Pancreas (tissue), 10 donors: ENCODE measurements at regions of chr13 and their contacts with region 1.

Region 1: GRCh38 chr13:41075034-41075433 is 13.7 kb downstream of the WBP4 start:
- DNase-seq: no peak
- ATAC-seq: peak in 3 of 4 donors; percentile 60 to 79 (median 75)
- H3K4me3 ChIP-seq: no peak overlapping the region
- H3K27ac ChIP-seq: no peak overlapping the region
- H3K4me1 ChIP-seq: no peaks in the 10 kb centered on the region
- H3K27me3 ChIP-seq: no peaks in the 10 kb centered on the region
- CTCF ChIP-seq: peak in 2 of 4 donors; percentile 24 to 26

Region 2: DNA sequence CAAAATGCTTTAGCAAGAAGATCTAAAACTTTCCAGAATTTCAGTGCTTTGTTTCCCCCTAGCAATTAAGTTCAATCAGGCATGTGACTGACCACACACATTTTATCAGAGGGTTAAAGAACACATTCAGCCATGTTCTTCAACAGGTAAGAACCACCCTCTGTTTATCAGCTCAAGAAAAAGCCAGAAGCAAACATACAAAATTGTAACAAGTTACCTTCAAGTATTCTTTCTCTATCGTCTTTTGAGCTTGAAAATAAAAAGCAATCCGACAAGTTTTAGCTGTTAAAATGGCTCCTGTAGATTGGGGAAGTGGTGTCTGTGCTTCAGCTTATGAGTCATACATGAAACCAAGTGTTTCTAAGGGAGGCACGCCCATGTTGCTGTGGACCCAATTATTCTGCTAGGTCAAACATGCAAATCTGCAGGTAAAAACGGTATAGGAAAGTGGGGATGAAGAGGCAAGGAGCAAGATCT is 56.0 kb before region 1 on chr13 and contains the start of gene ELF1:
- intact Hi-C with region 1: no loop called
- DNase-seq: peak in 4 of 6 donors; percentile 31 to 67 (median 52)
- ATAC-seq: peak; percentile 83 to 95 (median 92)
- H3K4me3 ChIP-seq: peak within 1 kb of the TSS; percentile 9 to 41 (median 12)
- H3K27ac ChIP-seq: peak within 1 kb of the TSS; percentile 22 to 96 (median 82)
- H3K4me1 ChIP-seq: peaks cover 6 to 43% (median 41%) of the 10 kb centered on the region in 3 donors
- H3K27me3 ChIP-seq: no peaks in the 10 kb centered on the region
- CTCF ChIP-seq: no peak
- total RNA-seq, gene ELF1: 31.6 to 61.6 (median 40.6) TPM

Region 3: GRCh38 chr13:41216160-41216559 is 141.1 kb after region 1 on chr13:
- intact Hi-C with region 1: loop called in 2 of 3 experiments (anchors 5 to 10 kb)
- DNase-seq: no peak
- ATAC-seq: no peak
- H3K4me3 ChIP-seq: no peak overlapping the region
- H3K27ac ChIP-seq: no peak overlapping the region
- H3K4me1 ChIP-seq: no peaks in the 10 kb centered on the region
- H3K27me3 ChIP-seq: no peaks in the 10 kb centered on the region
- CTCF ChIP-seq: no peak

Region 4: DNA sequence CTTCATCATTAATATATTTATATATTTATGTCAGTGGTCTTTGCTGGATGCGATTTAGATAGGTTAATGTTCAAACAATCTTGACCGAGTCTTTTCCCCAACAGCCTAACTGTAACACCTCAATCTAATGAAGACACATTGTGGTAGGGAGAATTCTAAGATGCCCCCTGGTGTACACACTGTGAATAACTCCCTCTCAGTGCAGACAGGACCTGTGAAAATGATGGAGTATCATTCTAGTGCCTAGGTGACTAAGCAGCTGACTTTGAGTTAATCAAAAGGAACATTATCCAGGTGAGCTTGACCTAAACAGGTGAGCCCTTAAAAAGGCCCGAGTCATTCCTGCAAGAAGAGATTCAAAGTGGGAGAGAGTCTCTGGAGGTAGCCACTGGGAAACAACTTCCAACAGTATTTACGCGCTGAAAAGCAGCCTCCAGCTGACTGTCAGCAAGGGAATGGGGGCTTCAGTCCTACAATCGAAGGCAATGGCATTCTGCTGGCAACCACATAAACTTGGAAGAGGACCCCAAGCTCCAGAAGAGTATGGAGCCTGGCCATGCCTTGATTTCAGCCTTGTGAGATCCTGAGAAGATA is 147.3 kb after region 1 on chr13:
- intact Hi-C with region 1: loop called in 2 of 3 experiments (anchors 5 to 10 kb)
- DNase-seq: peak in 3 of 6 donors; percentile 25 to 64 (median 39)
- ATAC-seq: peak; percentile 83 to 96 (median 95)
- H3K4me3 ChIP-seq: no peak overlapping the region
- H3K27ac ChIP-seq: no peak overlapping the region
- H3K4me1 ChIP-seq: no peaks in the 10 kb centered on the region
- H3K27me3 ChIP-seq: no peaks in the 10 kb centered on the region
- CTCF ChIP-seq: peak; percentile 51 to 88 (median 74)